Common myeloid progenitor, CD34-positive (primary cell): ENCODE measurements at regions of chr3 and their contacts with region 1.

Region 1: GRCh38 chr3:52851348-52851747 is 16.5 kb upstream of the MUSTN1 start:
- DNase-seq: peak; percentile 72 to 80 (median 75)
- H3K4me3 ChIP-seq: no peak overlapping the region
- H3K27ac ChIP-seq: no peak overlapping the region
- H3K4me1 ChIP-seq: peaks cover 0 to 6% (median 4%) of the 10 kb centered on the region in 4 experiments
- H3K27me3 ChIP-seq: no peaks in the 10 kb centered on the region

Region 2: DNA sequence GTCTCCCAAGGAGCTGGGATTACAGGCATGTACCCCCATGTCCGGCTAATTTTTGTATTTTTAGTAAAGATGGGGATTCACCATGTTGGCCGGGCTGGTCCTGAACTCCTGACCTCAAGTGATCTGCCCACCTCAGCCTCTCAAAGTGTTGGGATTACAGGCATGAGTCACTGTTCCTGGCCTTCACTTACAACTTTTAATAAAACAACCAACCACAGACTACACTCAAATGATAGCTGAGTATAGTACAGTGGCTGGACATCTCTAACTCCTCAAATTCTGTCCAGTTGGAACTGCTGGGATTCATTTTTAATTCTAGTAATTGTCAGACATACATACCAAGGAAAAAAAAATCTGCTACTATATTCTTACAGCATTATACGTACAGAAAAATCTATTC is 236.7 kb before region 1 on chr3:
- CTCF ChIA-PET with region 1: no interaction called
- POLR2A ChIA-PET with region 1: no interaction called
- DNase-seq: no peak
- H3K4me3 ChIP-seq: no peak overlapping the region
- H3K27ac ChIP-seq: no peak overlapping the region
- H3K4me1 ChIP-seq: no peaks in the 10 kb centered on the region
- H3K27me3 ChIP-seq: no peaks in the 10 kb centered on the region

Region 3: DNA sequence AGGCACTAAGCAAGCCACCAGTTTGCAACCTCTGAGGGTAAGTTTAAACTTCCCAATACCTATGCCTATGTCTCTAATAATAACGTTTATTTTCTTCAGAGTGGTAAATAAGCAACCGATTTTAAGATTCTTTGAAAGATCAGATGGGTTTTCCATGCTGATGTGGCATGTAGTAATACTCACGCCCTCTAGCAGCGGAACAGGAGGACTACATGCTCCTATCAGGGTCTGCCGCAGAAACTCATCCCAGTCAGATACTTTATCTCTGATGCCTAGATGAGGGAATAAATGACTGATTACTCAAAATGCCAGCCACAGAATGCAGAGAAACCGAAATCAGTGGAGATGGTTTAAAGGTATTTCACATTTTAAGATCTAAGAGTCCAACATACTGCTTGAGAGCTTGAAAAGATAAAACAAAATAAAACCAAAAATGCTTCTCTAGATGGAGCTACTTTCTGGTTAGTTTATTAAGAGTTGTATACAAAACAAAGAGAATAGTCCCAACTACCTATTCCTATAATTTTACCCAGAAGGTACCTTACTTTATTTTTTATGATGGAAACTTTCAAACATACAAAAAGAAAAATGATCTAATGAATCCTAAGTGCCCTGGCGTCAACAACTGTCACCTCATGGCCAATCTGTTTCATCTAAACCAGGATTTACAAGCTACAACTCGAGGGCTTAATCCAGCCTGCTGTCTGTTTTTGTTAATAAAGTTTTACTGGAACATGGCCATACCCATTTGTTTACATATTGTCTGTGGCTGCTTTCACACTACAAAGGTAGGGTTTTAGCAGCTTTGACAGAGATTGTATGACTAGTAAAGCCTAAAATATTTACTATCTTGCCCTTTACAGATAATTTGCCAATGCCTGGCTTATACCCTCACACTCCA is 83.5 kb after region 1 on chr3:
- CTCF ChIA-PET with region 1: interaction called, 22 read pairs
- POLR2A ChIA-PET with region 1: no interaction called
- DNase-seq: peak; percentile 58 to 70 (median 68)
- H3K4me3 ChIP-seq: no peak overlapping the region
- H3K27ac ChIP-seq: no peak overlapping the region
- H3K4me1 ChIP-seq: no peaks in the 10 kb centered on the region
- H3K27me3 ChIP-seq: peaks cover 0 to 6% (median 0%) of the 10 kb centered on the region in 5 experiments

Region 4: GRCh38 chr3:52973806-52974205 is 122.5 kb after region 1 on chr3:
- CTCF ChIA-PET with region 1: no interaction called
- POLR2A ChIA-PET with region 1: no interaction called
- DNase-seq: no peak
- H3K4me3 ChIP-seq: no peak overlapping the region
- H3K27ac ChIP-seq: no peak overlapping the region
- H3K4me1 ChIP-seq: no peaks in the 10 kb centered on the region
- H3K27me3 ChIP-seq: no peaks in the 10 kb centered on the region

Region 5: GRCh38 chr3:53056442-53056841 is 205.1 kb after region 1 on chr3:
- CTCF ChIA-PET with region 1: interaction called, 11 read pairs
- POLR2A ChIA-PET with region 1: no interaction called
- DNase-seq: peak in 1 of 3 donors; percentile 23
- H3K4me3 ChIP-seq: no peak overlapping the region
- H3K27ac ChIP-seq: no peak overlapping the region
- H3K4me1 ChIP-seq: no peaks in the 10 kb centered on the region
- H3K27me3 ChIP-seq: peaks cover 0 to 14% (median 3%) of the 10 kb centered on the region in 5 experiments

Region 6: GRCh38 chr3:53072653-53073552 is 221.6 kb after region 1 on chr3:
- CTCF ChIA-PET with region 1: interaction called, 14 read pairs
- POLR2A ChIA-PET with region 1: no interaction called
- DNase-seq: peak; percentile 76 to 89 (median 88)
- H3K4me3 ChIP-seq: peak overlapping the region; percentile 51 to 84 (median 74)
- H3K27ac ChIP-seq: peak overlapping the region in 1 of 2 experiments; percentile 32
- H3K4me1 ChIP-seq: peaks cover 0 to 21% (median 17%) of the 10 kb centered on the region in 4 experiments
- H3K27me3 ChIP-seq: peaks cover 0 to 6% (median 0%) of the 10 kb centered on the region in 5 experiments

Region 7: DNA sequence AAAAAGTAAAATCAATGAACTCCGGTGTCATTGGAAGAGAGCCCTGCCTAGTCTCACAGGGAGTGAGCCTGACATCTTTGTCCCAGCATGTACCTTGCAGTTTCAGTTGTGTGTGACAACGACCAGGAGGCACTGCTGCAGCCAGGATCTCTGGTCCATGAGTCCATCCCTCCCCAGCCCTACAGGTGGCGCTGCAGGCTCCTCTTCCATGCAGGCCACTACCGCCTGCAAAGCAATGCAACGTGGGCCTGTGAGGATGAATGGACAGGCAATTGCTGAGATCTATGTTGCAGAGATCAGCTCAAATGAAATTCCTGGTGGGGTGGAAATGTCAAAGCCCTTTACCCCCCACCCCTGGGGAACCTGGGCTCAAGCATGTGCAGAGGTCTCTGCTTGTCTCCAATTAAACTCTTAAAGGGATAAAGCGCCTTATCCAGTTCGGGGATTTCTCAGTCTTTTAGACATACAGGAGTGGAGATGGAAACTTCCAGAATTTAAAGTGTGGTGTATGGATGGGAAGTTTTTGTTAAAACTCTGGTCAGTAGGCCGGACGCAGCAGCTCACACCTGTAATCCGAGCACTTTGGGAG is 368.6 kb after region 1 on chr3:
- CTCF ChIA-PET with region 1: no interaction called
- POLR2A ChIA-PET with region 1: no interaction called
- DNase-seq: peak; percentile 79 to 86 (median 81)
- H3K4me3 ChIP-seq: no peak overlapping the region
- H3K27ac ChIP-seq: no peak overlapping the region
- H3K4me1 ChIP-seq: peaks cover 0 to 2% (median 0%) of the 10 kb centered on the region in 4 experiments
- H3K27me3 ChIP-seq: no peaks in the 10 kb centered on the region